ENCODE measurements at regions of chr1 and their contacts with region 1.

Region 1: GRCh38 chr1:230642263-230642959 is at the start of gene COG2:
- DNase-seq: peak; percentile 95
- H3K4me3 Mint-ChIP-seq: peak within 1 kb of the TSS; percentile 94
- H3K27ac Mint-ChIP-seq: peak within 1 kb of the TSS; percentile 75
- H3K4me1 Mint-ChIP-seq: peaks cover 39% of the 10 kb centered on the region
- H3K27me3 Mint-ChIP-seq: peaks cover 11% of the 10 kb centered on the region
- total RNA-seq, gene COG2: 19.9 to 22.1 TPM

Region 2: GRCh38 chr1:229625915-229626831 is 1016.2 kb before region 1 on chr1 and contains the starts of genes TAF5L and URB2:
- CTCF ChIA-PET with region 1: no interaction called
- intact Hi-C with region 1: loop called (anchors 2 kb)
- DNase-seq: peak; percentile 85
- H3K4me3 Mint-ChIP-seq: peak within 1 kb of the TSS; percentile 99
- H3K27ac Mint-ChIP-seq: peak within 1 kb of the TSS; percentile 89
- H3K4me1 Mint-ChIP-seq: peaks cover 51% of the 10 kb centered on the region
- H3K27me3 Mint-ChIP-seq: no peaks in the 10 kb centered on the region
- total RNA-seq, gene TAF5L: 10.3 TPM
- total RNA-seq, gene URB2: 9.5 to 10.0 TPM

Region 3: DNA sequence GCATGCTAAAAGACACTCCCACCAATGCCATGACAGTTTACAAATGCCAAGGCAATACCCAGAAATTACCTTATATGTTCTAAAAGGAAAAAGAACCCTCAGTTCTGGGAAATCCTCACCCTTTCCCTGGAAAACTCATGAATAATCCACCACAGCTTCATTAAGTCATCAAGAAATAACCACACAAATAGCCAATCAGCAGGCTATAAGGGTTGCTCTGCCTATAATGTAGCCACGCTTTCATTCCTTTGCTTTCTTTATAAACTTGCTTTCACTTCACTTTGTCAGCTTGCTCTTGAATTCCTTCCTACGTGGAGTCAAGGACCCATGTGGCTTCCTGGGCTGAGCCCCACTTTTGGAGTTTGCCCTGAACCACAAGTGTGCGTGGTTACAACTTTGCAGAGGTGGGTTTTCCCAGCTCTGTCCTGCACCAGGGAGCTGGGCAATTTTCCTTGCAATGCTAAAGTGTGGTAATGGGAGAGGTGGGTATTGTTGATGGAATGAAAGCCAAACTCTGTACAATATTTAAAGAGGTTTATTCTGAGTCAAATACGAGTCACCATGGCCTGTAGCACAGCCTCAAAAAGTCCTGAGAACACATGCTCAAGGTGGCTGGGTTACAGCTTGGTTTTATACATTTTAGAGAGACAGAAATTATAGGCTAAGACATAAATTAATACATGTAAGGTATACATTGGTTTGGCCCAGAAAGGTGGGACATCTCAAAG is 42.3 kb before region 1 on chr1:
- CTCF ChIA-PET with region 1: no interaction called
- intact Hi-C with region 1: no loop called
- DNase-seq: no peak
- H3K4me3 Mint-ChIP-seq: no peak overlapping the region
- H3K27ac Mint-ChIP-seq: no peak overlapping the region
- H3K4me1 Mint-ChIP-seq: no peaks in the 10 kb centered on the region
- H3K27me3 Mint-ChIP-seq: peaks cover 13% of the 10 kb centered on the region

Region 4: DNA sequence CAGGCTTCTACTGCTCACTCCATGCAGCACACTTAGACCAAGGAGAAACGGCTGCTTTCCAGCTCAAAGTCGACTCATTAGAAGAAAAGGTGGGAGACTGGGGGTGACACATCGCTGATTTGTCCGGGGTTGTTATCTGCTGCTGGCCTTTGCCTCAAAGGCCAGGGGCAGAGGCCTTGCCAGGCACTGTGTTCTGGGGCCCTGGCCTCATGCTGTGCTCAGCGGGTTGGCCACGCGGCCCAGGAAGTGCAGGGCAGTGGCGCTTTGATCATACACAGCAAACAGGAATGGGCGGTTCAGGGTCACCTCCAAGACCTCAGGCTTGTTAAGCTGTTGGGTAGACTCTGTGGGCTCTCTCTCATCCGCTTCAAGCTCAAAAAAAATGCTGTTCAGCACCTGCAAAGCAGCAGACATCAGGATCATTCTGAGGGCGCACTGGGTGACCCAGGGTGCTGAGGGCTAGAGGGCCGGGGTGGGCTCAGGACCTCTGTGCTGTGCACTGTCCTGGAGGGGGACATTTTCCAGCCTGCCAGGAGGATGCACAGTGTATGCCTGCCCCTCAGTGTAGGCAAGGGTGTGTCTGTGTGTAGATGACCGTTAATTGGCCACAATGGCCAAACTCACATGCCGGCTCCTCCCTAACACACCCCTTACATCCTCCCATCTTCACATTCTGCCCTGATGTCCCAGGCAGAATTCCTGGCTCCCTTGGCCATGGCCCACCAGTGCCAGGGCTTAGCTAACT is 60.7 kb after region 1 on chr1:
- CTCF ChIA-PET with region 1: no interaction called
- intact Hi-C with region 1: no loop called
- DNase-seq: no peak
- H3K4me3 Mint-ChIP-seq: no peak overlapping the region
- H3K27ac Mint-ChIP-seq: no peak overlapping the region
- H3K4me1 Mint-ChIP-seq: no peaks in the 10 kb centered on the region
- H3K27me3 Mint-ChIP-seq: peaks cover 3% of the 10 kb centered on the region

Region 5: GRCh38 chr1:230797942-230798418 is 155.6 kb after region 1 on chr1:
- CTCF ChIA-PET with region 1: no interaction called
- intact Hi-C with region 1: loop called (anchors 5 kb)
- DNase-seq: peak; percentile 23
- H3K4me3 Mint-ChIP-seq: no peak overlapping the region
- H3K27ac Mint-ChIP-seq: no peak overlapping the region
- H3K4me1 Mint-ChIP-seq: no peaks in the 10 kb centered on the region
- H3K27me3 Mint-ChIP-seq: peaks cover 12% of the 10 kb centered on the region

Region 6: GRCh38 chr1:230867903-230868735 is 225.7 kb after region 1 on chr1 and contains the start of gene C1orf198:
- CTCF ChIA-PET with region 1: no interaction called
- intact Hi-C with region 1: loop called (anchors 2 kb)
- DNase-seq: peak; percentile 75
- H3K4me3 Mint-ChIP-seq: peak within 1 kb of the TSS; percentile 84
- H3K27ac Mint-ChIP-seq: no peak within 1 kb of the TSS
- H3K4me1 Mint-ChIP-seq: peaks cover 18% of the 10 kb centered on the region
- H3K27me3 Mint-ChIP-seq: peaks cover 16% of the 10 kb centered on the region
- total RNA-seq, gene C1orf198: 4.7 to 4.9 TPM

Region 7: DNA sequence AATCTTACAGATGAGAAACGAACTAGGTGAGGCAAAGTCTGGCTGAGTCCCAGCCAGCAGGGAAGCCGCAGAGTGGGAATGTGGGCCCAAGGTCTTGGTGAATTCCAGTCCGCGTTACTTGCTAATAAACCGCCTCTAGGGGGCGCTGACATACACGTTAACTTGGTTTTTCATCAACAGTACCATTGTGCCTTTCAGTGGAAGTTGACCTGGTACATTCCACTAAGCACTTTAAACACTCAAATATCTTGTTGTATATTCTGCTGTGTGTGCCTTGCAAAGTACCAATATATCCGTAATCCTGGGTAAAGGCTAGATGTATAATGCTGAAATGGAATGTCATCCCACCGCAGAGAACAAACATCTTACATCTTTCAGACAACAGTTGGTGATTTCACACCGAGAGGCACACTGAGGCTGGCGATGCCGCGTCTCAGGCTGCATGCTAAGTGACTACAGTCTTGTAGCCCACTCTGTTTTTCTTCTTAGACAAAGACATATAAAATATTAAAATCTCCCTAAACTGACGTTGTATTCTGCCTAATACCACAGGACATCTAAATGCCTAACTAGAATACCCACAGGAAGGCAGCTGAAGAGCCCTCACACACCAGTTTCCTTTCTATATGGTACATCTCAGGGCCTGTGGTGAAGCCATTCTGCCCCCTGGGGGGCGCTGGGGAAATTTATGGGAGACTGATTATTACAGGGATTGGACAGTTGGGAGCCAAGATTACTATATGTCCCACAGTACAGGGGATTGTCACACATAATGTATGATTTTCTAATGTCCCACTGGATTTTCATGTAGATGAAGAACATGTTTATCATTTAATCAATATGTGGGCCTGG is 275.1 kb after region 1 on chr1:
- CTCF ChIA-PET with region 1: no interaction called
- intact Hi-C with region 1: no loop called
- DNase-seq: peak; percentile 86
- H3K4me3 Mint-ChIP-seq: no peak overlapping the region
- H3K27ac Mint-ChIP-seq: no peak overlapping the region
- H3K4me1 Mint-ChIP-seq: peaks cover 5% of the 10 kb centered on the region
- H3K27me3 Mint-ChIP-seq: no peaks in the 10 kb centered on the region

Region 8: GRCh38 chr1:231240883-231241735 is 598.7 kb after region 1 on chr1 and contains the start of gene GNPAT:
- CTCF ChIA-PET with region 1: interaction called, 4 read pairs
- intact Hi-C with region 1: loop called (anchors 2 kb)
- DNase-seq: peak; percentile 90
- H3K4me3 Mint-ChIP-seq: peak within 1 kb of the TSS; percentile 97
- H3K27ac Mint-ChIP-seq: peak within 1 kb of the TSS; percentile 82
- H3K4me1 Mint-ChIP-seq: peaks cover 58% of the 10 kb centered on the region
- H3K27me3 Mint-ChIP-seq: no peaks in the 10 kb centered on the region
- total RNA-seq, gene GNPAT: 60.4 to 62.0 TPM